ENCODE measurements at regions of chr6 and their contacts with region 1.

Region 1: DNA sequence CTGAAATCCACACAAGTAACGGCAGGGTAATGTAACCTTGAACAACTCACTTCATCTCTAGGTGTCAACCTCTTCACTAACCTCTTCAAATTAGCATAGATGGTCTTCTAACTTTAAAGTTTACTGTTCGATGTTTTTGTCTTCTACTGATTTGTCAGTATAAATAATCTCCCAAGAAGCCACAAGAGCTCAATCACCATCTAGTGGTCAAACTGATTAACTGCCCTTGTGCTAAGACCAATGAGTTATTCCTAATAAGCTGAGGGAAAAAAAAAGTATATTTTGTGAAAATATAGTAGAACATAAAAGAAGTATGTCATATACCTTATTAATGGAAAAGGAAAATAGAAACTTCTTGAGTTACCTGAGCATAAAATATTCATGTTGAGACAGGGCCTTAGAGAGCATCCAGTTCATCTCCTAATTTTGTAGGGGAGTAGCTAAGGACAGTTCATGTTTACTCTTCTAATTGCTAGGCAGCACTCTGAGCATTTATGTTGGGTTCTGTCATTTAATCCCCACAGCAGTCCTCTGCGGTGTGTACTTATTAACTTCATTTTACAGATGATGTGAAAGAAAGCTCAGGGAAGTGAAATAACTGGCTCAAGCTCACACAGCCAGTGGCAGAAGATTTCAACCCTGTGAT is 317.1 kb downstream of the ESR1 start:
- DNase-seq: no peak
- H3K4me3 ChIP-seq: no peak overlapping the region
- H3K27ac ChIP-seq: no peak overlapping the region
- H3K4me1 ChIP-seq: peaks cover 0 to 8% (median 0%) of the 10 kb centered on the region in 3 donors
- H3K27me3 ChIP-seq: no peaks in the 10 kb centered on the region
- CTCF ChIP-seq: peak; percentile 43 to 88 (median 74)
- POLR2A ChIP-seq: no peak

Region 2: GRCh38 chr6:151675746-151676416 is 448.7 kb before region 1 on chr6:
- intact Hi-C with region 1: loop called (anchors 10 kb)
- DNase-seq: no peak
- H3K4me3 ChIP-seq: no peak overlapping the region
- H3K27ac ChIP-seq: no peak overlapping the region
- H3K4me1 ChIP-seq: peaks cover 0 to 35% (median 0%) of the 10 kb centered on the region in 3 donors
- H3K27me3 ChIP-seq: no peaks in the 10 kb centered on the region
- CTCF ChIP-seq: peak; percentile 37 to 90 (median 74)
- POLR2A ChIP-seq: no peak

Region 3: GRCh38 chr6:151765444-151765886 is 359.1 kb before region 1 on chr6:
- intact Hi-C with region 1: loop called (anchors 10 kb)
- DNase-seq: no peak
- H3K4me3 ChIP-seq: no peak overlapping the region
- H3K27ac ChIP-seq: no peak overlapping the region
- H3K4me1 ChIP-seq: peaks cover 0 to 28% (median 0%) of the 10 kb centered on the region in 3 donors
- H3K27me3 ChIP-seq: no peaks in the 10 kb centered on the region
- CTCF ChIP-seq: peak in 5 of 6 experiments; percentile 56 to 79 (median 72)
- POLR2A ChIP-seq: no peak